Dendritic cell treated with granulocyte-macrophage colony-stimulating factor and Interleukin-4, amounts not matched to agents 40 ng/mL and 50 ng/mL, for 4 days (primary cell): ENCODE measurements at regions of chr13 and their contacts with region 1.

Region 1: GRCh38 chr13:97975848-97976609 is 22.6 kb downstream of the IPO5 start:
- H3K4me3 Mint-ChIP-seq: peak overlapping the region; percentile 97
- H3K27ac Mint-ChIP-seq: peak overlapping the region; percentile 89
- H3K4me1 Mint-ChIP-seq: peaks cover 16% of the 10 kb centered on the region
- H3K27me3 Mint-ChIP-seq: peaks cover 7% of the 10 kb centered on the region

Region 2: DNA sequence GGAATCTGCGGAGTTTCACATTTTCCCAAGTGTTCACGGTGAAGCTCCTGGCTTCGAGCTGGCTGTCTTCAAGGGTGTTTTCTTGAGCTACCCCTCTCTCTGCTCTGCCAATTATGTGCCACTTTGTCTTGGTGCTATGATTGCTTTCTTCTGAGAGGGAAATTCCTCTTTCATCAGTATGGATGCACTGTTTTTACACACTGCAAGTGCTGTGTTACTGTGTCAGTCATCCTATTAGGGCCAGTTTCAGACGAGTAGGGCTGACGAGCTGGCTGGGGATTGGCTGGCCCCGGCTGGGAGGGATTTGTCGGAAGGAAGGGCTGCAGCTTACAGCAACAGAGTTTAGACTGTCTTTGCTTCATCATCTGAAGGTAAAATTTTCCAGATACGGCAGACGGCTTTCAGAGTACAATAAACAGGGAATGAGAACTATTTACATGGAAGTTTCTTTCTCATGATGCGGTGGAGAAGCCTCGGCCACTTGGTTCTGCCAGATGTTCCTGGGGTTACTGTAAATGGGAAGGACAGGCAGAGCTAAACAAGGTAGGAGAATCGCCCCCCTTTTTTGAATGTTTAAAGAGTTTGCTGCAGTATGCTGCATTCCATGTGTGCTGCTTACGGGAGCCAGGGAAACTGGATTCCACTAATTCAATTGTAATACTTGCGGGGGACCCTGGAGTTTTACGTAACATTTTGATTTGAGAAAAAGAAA is 753.9 kb before region 1 on chr13 and contains the start of gene MBNL2:
- intact Hi-C with region 1: loop called (anchors 10 kb)
- H3K4me3 Mint-ChIP-seq: peak within 1 kb of the TSS; percentile 81
- H3K27ac Mint-ChIP-seq: peak within 1 kb of the TSS; percentile 81
- H3K4me1 Mint-ChIP-seq: peaks cover 35% of the 10 kb centered on the region
- H3K27me3 Mint-ChIP-seq: peaks cover 10% of the 10 kb centered on the region

Region 3: GRCh38 chr13:97866346-97866745 is 109.7 kb before region 1 on chr13:
- intact Hi-C with region 1: no loop called
- H3K4me3 Mint-ChIP-seq: no peak overlapping the region
- H3K27ac Mint-ChIP-seq: no peak overlapping the region
- H3K4me1 Mint-ChIP-seq: no peaks in the 10 kb centered on the region
- H3K27me3 Mint-ChIP-seq: no peaks in the 10 kb centered on the region